ENCODE measurements at regions of chr11 and their contacts with region 1.

Region 1: GRCh38 chr11:66408488-66409214 is 12.2 kb upstream of the NPAS4 start:
- DNase-seq: peak; percentile 94
- ATAC-seq: peak; percentile 92

Region 2: DNA sequence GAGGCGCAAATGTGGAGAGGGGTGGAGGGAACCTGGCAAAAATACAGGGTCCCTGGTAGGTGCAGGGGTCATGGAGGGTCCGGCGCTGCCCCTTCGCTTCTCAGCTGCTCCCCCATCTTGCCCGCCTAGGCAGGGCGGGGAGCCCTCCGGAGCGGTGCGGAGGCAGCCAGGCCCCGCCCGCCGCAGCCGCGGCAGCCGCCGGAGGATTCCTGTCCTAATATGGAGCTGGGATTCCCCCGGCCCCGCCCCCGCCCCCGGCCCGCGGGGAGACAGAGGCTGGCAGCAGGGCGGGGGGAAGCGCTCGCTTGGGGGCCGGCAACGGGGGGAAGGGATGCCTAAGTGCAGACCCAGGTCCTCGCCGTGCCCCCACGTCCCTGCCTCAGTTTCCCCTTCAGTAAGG is 11.2 kb after region 1 on chr11:
- intact Hi-C with region 1: no loop called
- DNase-seq: no peak
- ATAC-seq: no peak

Region 3: GRCh38 chr11:66429983-66430602 is 21.4 kb after region 1 on chr11:
- intact Hi-C with region 1: loop called (anchors 1 kb)
- DNase-seq: peak; percentile 89
- ATAC-seq: peak; percentile 75

Region 4: DNA sequence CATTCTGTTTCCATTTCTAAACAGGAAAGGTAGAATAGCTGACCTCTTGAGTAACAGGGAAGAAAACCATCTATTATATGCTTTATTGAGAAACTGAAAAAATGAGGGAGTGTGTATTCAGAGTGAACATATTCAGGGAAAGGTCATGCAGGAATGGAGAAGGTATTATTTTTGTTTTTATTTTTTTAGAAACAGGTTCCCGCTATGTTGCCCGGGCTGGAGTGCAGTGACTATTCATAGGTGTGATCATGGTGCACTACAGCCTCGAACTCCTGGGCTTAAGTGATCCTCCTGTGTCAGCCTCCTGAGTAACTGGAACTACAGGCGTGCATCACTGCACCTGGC is 425.8 kb after region 1 on chr11:
- intact Hi-C with region 1: loop called (anchors 5 kb)
- DNase-seq: no peak
- ATAC-seq: no peak